HepG2 (cell line): ENCODE measurements at regions of chr11 and their contacts with region 1.

Region 1: DNA sequence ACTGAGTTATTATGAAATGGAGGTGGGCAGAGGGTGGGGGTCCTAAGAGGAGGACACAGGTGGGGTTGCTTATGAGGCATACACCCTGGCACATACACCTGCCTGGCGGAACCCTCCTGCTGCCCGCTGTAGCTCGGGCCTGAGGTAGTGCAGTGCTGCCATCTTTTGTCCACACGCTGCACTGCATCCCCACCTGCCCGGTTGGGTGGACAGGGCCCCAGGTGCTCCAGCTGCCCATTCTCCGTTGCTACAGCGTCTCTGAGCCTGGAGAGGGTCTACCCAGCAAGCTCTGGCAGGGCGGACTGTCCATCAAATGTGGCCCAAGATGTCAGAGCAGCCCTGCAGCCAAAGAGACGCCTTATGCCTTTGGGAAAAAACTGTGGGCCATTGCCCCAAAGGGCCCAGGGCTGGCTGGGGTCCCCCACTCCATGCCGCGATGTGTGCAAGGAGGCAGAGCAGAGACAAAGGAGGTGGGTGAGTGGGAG is 131.2 kb downstream of the BUD13 start:
- DNase-seq: no peak
- ATAC-seq: peak; percentile 92
- H3K4me3 ChIP-seq: no peak overlapping the region
- H3K27ac ChIP-seq: no peak overlapping the region
- H3K4me1 ChIP-seq: no peaks in the 10 kb centered on the region
- H3K27me3 ChIP-seq: no peaks in the 10 kb centered on the region; a peak in 1 of 5 replicates
- CTCF ChIP-seq: peak; percentile 94
- EP300 ChIP-seq: no peak
- POLR2A ChIP-seq: no peak
- RAD21 ChIP-seq: peak; percentile 90

Region 2: GRCh38 chr11:115103921-115104320 is 1537.7 kb before region 1 on chr11:
- CTCF ChIA-PET with region 1: no interaction called
- POLR2A ChIA-PET with region 1: no interaction called
- in situ Hi-C with region 1: no loop called
- intact Hi-C with region 1: loop called (anchors 10 kb)
- DNase-seq: no peak
- ATAC-seq: peak; percentile 35; the same call in 1 of the 3 replicates
- H3K4me3 ChIP-seq: no peak overlapping the region
- H3K27ac ChIP-seq: no peak overlapping the region
- H3K4me1 ChIP-seq: no peaks in the 10 kb centered on the region
- H3K27me3 ChIP-seq: peaks cover 0 to 10% of the 10 kb centered on the region in 2 experiments; a peak in 2 of 5 replicates
- CTCF ChIP-seq: no peak
- EP300 ChIP-seq: no peak
- POLR2A ChIP-seq: no peak
- RAD21 ChIP-seq: no peak

Region 3: GRCh38 chr11:116366980-116367645 is 274.5 kb before region 1 on chr11:
- CTCF ChIA-PET with region 1: no interaction called
- POLR2A ChIA-PET with region 1: no interaction called
- in situ Hi-C with region 1: no loop called
- intact Hi-C with region 1: no loop called
- DNase-seq: peak; percentile 83
- ATAC-seq: peak; percentile 98
- H3K4me3 ChIP-seq: no peak overlapping the region
- H3K27ac ChIP-seq: no peak overlapping the region
- H3K4me1 ChIP-seq: peaks cover 44% of the 10 kb centered on the region
- H3K27me3 ChIP-seq: no peaks in the 10 kb centered on the region
- CTCF ChIP-seq: no peak
- EP300 ChIP-seq: 0 out of 4 replicates have a peak, but pooled peaks of 1 of the 2 experiments have one; percentile 44
- POLR2A ChIP-seq: no peak
- RAD21 ChIP-seq: no peak

Region 4: DNA sequence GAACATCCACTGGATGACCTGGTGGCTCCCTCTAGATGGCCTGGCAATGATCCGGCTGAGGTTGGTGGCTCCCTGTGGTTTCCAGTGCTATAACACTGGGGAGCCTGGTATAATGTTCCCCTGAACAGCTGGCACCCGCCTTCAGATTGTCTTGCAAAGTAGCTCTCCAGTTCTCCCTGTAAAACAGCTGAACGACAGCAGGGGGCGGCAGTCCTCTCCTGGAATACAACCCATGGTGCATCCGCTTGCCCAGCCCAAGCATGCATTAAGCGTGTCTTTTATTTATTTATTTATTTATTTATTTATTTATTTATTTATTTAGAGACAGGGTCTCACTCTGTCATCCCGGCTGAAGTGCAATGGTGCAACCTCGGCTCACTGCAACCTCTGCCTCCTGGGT is 127.7 kb before region 1 on chr11:
- CTCF ChIA-PET with region 1: interaction called, 33 read pairs
- POLR2A ChIA-PET with region 1: no interaction called
- in situ Hi-C with region 1: loop called (anchors 5 kb)
- intact Hi-C with region 1: no loop called
- DNase-seq: peak; percentile 64
- ATAC-seq: peak; percentile 81
- H3K4me3 ChIP-seq: no peak overlapping the region
- H3K27ac ChIP-seq: no peak overlapping the region
- H3K4me1 ChIP-seq: no peaks in the 10 kb centered on the region
- H3K27me3 ChIP-seq: no peaks in the 10 kb centered on the region; a peak in 1 of 5 replicates
- CTCF ChIP-seq: peak; percentile 72
- EP300 ChIP-seq: no peak
- POLR2A ChIP-seq: no peak
- RAD21 ChIP-seq: peak; percentile 61